Transverse colon (tissue), 4 donors: ENCODE measurements at regions of chr15 and their contacts with region 1.

Region 1: DNA sequence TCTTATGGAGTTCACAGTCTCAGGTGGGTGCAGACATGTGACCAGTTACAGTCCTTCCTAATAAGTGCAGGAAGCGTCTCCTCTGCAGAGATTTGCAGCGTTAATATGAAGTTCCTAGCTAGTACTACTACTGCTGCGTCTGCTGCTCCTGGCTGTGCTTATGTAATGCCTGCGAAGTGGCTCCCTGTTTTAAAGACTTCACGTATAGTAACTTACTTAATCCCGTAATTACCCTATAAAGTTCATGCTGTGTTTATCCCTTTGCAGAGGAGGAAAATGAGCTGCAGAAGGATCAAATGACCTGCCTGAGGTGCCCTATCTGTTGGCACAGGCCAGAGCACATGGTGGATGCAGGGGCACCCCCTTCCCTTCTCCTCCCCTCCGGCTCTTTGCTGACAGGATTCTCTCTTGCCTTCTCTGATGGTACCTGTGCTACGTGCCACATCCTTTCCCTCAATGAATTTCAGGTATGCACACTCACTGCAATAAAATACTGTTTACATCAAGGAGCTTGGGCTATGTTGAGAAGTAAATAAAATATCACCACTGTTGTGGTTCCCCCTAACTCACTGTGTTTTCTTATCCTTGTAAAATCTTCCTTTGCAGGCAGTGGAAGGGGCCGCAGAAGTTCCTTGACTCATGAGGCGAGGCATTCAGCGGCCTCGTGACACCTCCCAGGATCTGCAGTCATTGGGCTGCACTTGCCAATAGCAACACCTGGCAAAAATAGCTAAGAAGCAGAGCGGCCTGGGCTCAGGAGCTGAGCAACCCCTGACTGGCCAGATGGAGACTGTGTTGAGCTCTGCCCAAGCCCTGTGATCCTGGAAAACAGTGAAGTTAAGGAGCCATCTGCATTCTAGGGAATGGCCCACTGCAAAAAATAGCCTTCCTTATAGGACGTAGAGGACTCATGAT is 188.9 kb upstream of the ATP10A start:
- DNase-seq: peak; percentile 7
- H3K4me3 ChIP-seq: no peak overlapping the region
- H3K27ac ChIP-seq: no peak overlapping the region
- H3K4me1 ChIP-seq: no peaks in the 10 kb centered on the region
- H3K27me3 ChIP-seq: no peaks in the 10 kb centered on the region
- CTCF ChIP-seq: no peak
- EP300 ChIP-seq: no peak
- POLR2A ChIP-seq: no peak

Region 2: DNA sequence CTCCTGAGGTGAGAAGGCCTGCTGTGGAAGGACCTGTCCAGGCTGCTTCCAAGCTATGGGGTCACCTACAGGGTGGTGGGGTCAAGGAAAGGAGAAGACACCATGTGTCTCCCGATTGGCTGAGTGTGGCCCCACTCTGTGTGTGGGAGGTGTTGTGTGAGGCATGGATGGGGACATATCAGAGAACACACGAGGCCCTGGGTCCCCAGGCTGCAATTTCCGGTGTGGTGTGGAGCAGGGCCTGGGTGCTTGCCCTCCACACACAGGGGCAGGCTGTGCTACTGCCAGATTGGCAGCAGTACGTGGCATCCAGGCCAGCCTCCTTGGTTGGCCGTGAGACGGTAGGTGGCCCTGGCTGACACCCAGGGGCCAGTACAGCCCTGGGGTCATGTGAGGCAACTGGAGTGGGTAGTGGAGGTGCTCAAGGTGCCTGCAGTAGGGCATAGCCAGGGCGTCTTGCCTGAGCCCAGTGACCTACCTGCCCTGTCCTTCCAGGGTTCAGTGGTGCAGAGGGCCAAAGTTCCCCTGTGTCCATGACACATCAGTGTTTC is 863.4 kb before region 1 on chr15:
- in situ Hi-C with region 1: no loop called
- intact Hi-C with region 1: no loop called
- DNase-seq: no peak
- H3K4me3 ChIP-seq: no peak overlapping the region
- H3K27ac ChIP-seq: no peak overlapping the region
- H3K4me1 ChIP-seq: no peaks in the 10 kb centered on the region
- H3K27me3 ChIP-seq: no peaks in the 10 kb centered on the region
- CTCF ChIP-seq: no peak
- EP300 ChIP-seq: no peak
- POLR2A ChIP-seq: no peak

Region 3: DNA sequence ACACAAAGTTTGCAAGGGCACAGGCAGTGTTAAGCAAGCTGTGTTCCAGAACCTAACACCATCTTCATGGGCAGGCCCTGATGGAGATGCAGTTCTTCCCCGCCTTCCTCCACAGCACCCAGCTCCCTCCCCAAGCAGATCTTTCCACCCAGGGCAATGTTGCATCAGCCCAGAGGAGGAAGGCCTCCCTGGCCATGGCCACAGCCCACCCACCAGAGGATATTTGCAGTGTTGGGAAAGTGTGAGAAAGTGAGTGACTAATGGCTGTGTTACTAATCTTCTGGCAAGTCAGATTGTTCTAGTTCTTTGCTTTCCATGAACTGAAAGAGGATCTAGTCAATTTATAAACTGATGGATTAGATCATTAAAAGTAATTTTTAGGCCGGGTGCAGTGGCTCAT is 146.9 kb before region 1 on chr15:
- in situ Hi-C with region 1: no loop called
- intact Hi-C with region 1: no loop called
- DNase-seq: peak; percentile 13
- H3K4me3 ChIP-seq: no peak overlapping the region
- H3K27ac ChIP-seq: no peak overlapping the region
- H3K4me1 ChIP-seq: no peaks in the 10 kb centered on the region
- H3K27me3 ChIP-seq: no peaks in the 10 kb centered on the region
- CTCF ChIP-seq: no peak
- EP300 ChIP-seq: no peak
- POLR2A ChIP-seq: no peak

Region 4: GRCh38 chr15:26179906-26180305 is 127.9 kb after region 1 on chr15:
- in situ Hi-C with region 1: loop called in 1 of 4 experiments (anchors 25 kb)
- intact Hi-C with region 1: no loop called
- DNase-seq: no peak
- H3K4me3 ChIP-seq: no peak overlapping the region
- H3K27ac ChIP-seq: no peak overlapping the region
- H3K4me1 ChIP-seq: no peaks in the 10 kb centered on the region
- H3K27me3 ChIP-seq: no peaks in the 10 kb centered on the region
- CTCF ChIP-seq: no peak
- EP300 ChIP-seq: no peak
- POLR2A ChIP-seq: no peak